ENCODE measurements at regions of chr3 and their contacts with region 1.

Region 1: DNA sequence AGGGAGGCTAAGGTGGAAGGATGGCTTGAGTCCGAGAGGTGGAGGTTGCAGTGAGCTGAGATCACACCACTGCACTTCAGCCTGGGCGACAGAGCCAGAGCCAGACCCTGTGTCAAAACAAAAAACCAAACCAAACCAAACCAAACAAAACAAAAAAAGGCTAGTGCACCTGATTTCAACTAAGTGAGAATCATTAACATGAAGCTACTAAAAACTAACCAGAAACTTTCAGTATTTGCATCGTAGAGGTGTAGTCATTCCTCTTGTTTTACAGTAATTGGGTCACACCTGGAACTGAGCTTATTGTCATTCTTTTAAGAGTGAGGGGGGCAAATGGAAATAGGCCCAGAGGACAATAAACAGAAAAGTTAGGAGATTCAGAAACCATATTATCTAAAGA is 58.5 kb downstream of the ST6GAL1 start:
- DNase-seq: peak; percentile 47
- H3K4me3 Mint-ChIP-seq: no peak overlapping the region
- H3K27ac Mint-ChIP-seq: peak overlapping the region; percentile 83
- H3K4me1 Mint-ChIP-seq: peaks cover 59% of the 10 kb centered on the region
- H3K27me3 Mint-ChIP-seq: no peaks in the 10 kb centered on the region

Region 2: DNA sequence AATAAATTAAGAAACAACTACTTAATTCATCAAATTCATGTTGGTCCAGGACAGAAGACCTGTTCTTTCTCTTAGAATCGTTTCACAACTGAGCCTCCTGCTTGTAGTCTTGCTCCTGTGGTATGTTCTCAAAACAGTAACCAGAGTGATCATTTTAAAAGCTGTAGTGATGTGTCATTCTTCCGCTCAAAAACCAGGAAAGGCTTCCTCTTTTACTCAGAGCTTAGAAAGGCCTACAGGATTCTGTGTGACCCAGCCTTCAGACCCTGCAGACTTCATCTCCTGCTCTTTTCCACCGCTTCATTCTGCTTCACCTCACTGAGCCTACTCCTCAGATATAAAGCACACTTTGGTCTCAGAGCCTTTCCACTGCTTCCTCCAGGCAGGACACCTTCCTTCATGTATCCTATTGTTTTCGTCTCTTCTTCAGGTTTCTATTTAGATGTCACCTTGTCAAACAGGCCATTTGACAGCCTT is 35.8 kb before region 1 on chr3:
- CTCF ChIA-PET with region 1: no interaction called
- intact Hi-C with region 1: loop called (anchors 1 kb)
- DNase-seq: peak; percentile 27
- H3K4me3 Mint-ChIP-seq: peak overlapping the region; percentile 4
- H3K27ac Mint-ChIP-seq: peak overlapping the region; percentile 60
- H3K4me1 Mint-ChIP-seq: peaks cover 67% of the 10 kb centered on the region
- H3K27me3 Mint-ChIP-seq: no peaks in the 10 kb centered on the region

Region 3: GRCh38 chr3:187000711-187001151 is 11.9 kb after region 1 on chr3:
- CTCF ChIA-PET with region 1: interaction called, 13 read pairs
- intact Hi-C with region 1: loop called (anchors 1 kb)
- DNase-seq: peak; percentile 76
- H3K4me3 Mint-ChIP-seq: peak overlapping the region; percentile 25
- H3K27ac Mint-ChIP-seq: peak overlapping the region; percentile 90
- H3K4me1 Mint-ChIP-seq: peaks cover 76% of the 10 kb centered on the region
- H3K27me3 Mint-ChIP-seq: no peaks in the 10 kb centered on the region

Region 4: GRCh38 chr3:187011915-187012314 is 23.1 kb after region 1 on chr3:
- CTCF ChIA-PET with region 1: no interaction called
- intact Hi-C with region 1: loop called (anchors 2 kb)
- DNase-seq: no peak
- H3K4me3 Mint-ChIP-seq: no peak overlapping the region
- H3K27ac Mint-ChIP-seq: peak overlapping the region; percentile 87
- H3K4me1 Mint-ChIP-seq: peaks cover 63% of the 10 kb centered on the region
- H3K27me3 Mint-ChIP-seq: no peaks in the 10 kb centered on the region

Region 5: DNA sequence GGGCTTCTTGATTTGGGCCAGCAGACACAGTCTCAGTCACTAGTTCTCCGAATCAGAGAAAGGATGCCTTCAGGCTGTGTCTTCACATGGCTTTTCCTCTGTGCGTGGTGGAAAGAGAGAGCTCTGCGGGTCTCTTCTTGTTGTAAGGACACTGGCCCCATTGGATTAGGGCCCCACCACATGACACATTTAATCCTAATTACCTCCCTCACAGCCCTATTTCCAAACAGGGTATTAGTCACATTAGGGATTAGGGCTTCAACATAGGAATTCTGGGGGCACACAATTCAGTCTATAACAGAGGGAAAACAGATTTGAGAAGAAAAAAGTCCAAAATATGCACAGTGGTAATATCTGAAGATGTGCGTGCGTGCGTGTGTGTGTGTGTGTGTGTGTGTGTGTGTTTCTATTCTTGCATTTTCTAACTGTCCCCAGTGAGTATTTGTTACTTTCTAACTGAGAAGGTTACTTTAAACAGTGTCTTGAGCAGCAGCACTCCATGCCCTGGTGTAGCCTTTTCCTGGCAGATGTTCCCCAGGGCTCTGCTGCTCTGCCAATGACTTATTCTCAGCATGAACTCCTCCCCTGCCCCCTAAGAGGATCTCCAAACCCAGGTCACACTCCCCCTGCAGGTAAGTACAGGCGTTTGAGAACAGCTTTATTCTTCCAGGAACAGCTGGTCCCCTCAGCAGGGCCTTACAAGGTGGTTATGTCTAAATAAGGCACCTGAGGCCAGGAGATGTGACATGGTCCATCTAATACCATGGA is 77.6 kb after region 1 on chr3:
- CTCF ChIA-PET with region 1: no interaction called
- intact Hi-C with region 1: loop called (anchors 2 kb)
- DNase-seq: peak; percentile 66
- H3K4me3 Mint-ChIP-seq: no peak overlapping the region
- H3K27ac Mint-ChIP-seq: peak overlapping the region; percentile 79
- H3K4me1 Mint-ChIP-seq: peaks cover 66% of the 10 kb centered on the region
- H3K27me3 Mint-ChIP-seq: no peaks in the 10 kb centered on the region

Region 6: DNA sequence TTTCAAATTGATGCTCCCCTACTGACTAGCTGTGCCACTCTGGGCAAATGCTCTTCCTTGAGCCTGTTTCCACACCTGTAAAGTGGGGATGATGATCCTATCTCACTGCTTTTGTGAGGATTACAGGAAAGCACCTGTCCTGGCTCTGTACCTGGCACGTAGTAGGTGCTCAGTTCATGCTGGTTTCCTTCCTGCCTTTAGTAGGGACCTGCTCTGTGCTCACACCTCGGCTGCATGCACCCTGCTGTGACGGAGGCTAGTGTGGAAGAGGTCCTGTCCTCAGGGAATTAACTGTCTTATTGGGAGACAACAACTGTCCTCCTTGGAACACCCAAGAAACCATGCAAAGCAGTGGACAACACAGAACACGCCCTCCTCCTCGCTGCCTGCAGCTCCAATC is 88.7 kb after region 1 on chr3:
- CTCF ChIA-PET with region 1: no interaction called
- intact Hi-C with region 1: no loop called
- DNase-seq: no peak
- H3K4me3 Mint-ChIP-seq: no peak overlapping the region
- H3K27ac Mint-ChIP-seq: peak overlapping the region; percentile 17
- H3K4me1 Mint-ChIP-seq: no peaks in the 10 kb centered on the region
- H3K27me3 Mint-ChIP-seq: no peaks in the 10 kb centered on the region

Region 7: GRCh38 chr3:187088701-187089100 is 99.9 kb after region 1 on chr3:
- CTCF ChIA-PET with region 1: no interaction called
- intact Hi-C with region 1: no loop called
- DNase-seq: no peak
- H3K4me3 Mint-ChIP-seq: no peak overlapping the region
- H3K27ac Mint-ChIP-seq: no peak overlapping the region
- H3K4me1 Mint-ChIP-seq: peaks cover 11% of the 10 kb centered on the region
- H3K27me3 Mint-ChIP-seq: no peaks in the 10 kb centered on the region

Measured in activated naive CD4-positive, alpha-beta T cell treated with anti-CD3 and anti-CD28 coated beads for 36 hours (primary cell).